ENCODE measurements at regions of chr6 and their contacts with region 1.

Region 1: DNA sequence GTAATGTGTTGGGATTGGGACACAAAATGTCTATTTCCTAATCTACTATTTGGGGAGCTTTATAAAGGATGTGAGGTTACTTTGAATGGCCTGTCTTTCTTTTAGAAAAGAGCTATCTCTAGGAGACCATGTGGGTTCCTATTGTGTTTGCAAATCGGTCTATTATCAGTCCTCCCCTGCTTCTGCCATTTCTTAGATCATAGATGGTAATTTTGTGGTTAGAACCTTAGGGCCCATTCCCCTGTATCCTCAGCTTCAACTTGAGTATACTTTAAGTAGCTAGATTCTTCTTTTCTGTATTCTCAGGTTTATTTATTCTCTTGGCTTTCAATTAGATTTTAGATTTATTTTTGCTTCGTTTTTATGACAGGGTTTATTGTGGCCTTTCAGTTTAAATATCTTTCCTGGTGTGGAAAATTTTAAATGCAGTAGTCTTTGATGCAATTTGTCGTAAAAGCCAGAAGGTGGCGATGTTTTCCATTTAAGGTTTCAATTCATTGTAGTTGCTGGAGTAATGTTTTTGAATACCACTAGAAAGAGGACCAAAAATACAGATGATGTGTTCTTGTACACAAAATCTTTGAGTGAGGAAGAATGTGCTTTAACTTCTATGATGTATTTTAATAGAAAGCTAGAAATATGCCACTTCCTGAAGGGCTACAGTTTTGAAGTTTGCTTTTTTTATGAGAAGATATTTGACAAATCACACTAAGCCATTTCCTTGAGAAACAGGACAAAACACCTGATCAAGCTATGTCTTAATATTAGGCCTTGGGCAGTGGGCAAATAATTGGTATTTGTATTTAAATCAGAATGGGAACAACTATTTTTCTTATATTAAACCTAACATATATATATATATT is 20.3 kb downstream of the TBPL1 start:
- DNase-seq: peak in 1 of 35 experiments; percentile 73
- ATAC-seq: peak; percentile 42 to 66 (median 55)
- H3K4me3 ChIP-seq: no peak overlapping the region
- H3K4me3 Mint-ChIP-seq: no peak overlapping the region
- H3K27ac ChIP-seq: no peak overlapping the region
- H3K27ac Mint-ChIP-seq: peak overlapping the region in 1 of 2 donors; percentile 52
- H3K4me1 ChIP-seq: peaks cover 2 to 5% of the 10 kb centered on the region in 2 experiments
- H3K4me1 Mint-ChIP-seq: peaks cover 50 to 64% (median 58%) of the 10 kb centered on the region in 3 donors
- H3K27me3 ChIP-seq: no peaks in the 10 kb centered on the region
- H3K27me3 Mint-ChIP-seq: no peaks in the 10 kb centered on the region

Region 2: DNA sequence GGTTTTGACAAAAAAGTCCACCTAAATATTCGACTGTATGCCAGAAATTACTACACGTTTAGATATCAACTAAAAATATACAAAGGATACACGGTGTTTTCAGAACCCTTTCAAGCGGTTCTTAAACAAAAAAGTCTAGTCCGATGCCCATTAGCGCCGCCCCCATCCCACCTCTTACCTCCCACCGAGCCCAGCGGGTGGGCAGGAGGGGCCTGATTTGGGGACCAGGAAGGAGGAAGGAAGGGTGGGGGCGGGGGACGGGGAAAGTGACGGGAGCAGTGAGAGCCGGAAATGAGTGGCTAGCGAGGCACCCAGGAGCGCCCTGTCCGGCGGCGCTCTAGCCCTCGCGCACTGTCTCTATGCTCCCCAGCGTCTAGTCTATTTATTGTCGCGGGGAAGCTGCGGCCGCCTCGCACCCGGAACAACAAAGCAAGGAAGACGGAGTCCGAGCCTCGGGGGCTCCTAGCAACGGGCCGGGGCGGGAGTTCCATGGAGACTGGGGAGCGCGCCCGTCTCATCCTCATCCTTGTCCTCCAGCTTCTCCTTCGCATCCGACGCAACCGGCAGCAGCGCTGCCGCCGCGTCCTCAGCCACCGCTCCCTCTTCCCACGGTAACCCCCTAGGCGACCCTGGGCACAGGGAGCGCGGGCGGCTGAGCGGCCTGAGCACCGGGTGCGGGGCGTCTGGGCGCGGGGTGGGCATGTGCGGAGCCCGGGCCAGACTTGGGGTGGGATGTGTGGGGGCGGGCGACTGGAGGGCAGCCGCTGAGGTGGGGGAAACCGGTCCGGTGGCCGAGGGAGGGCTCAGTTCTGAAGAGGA is 20.3 kb before region 1 on chr6 and contains the start of gene TBPL1:
- CTCF ChIA-PET with region 1: interaction called, 9 to 25 read pairs
- POLR2A ChIA-PET with region 1: interaction called, 3 to 9 read pairs
- DNase-seq: peak; percentile 77 to 94 (median 86)
- ATAC-seq: peak; percentile 90 to 94 (median 92)
- H3K4me3 ChIP-seq: peak within 1 kb of the TSS; percentile 79 to 86
- H3K4me3 Mint-ChIP-seq: peak within 1 kb of the TSS; percentile 86 to 98 (median 95)
- H3K27ac ChIP-seq: peak within 1 kb of the TSS; percentile 86
- H3K27ac Mint-ChIP-seq: peak within 1 kb of the TSS; percentile 89 to 92
- H3K4me1 ChIP-seq: peaks cover 17 to 21% of the 10 kb centered on the region in 2 experiments
- H3K4me1 Mint-ChIP-seq: peaks cover 45 to 50% (median 47%) of the 10 kb centered on the region in 3 donors
- H3K27me3 ChIP-seq: no peaks in the 10 kb centered on the region
- H3K27me3 Mint-ChIP-seq: no peaks in the 10 kb centered on the region
- total RNA-seq, gene TBPL1: 27.7 to 30.5 (median 28.9) TPM

Region 3: GRCh38 chr6:133991096-133991593 is 17.8 kb after region 1 on chr6:
- CTCF ChIA-PET with region 1: interaction called, 3 to 5 read pairs
- POLR2A ChIA-PET with region 1: interaction called in 1 of 2 experiments, 10 read pairs
- DNase-seq: no peak
- ATAC-seq: no peak
- H3K4me3 ChIP-seq: no peak overlapping the region
- H3K4me3 Mint-ChIP-seq: no peak overlapping the region
- H3K27ac ChIP-seq: no peak overlapping the region
- H3K27ac Mint-ChIP-seq: no peak overlapping the region
- H3K4me1 ChIP-seq: peaks cover 0 to 5% of the 10 kb centered on the region in 2 experiments
- H3K4me1 Mint-ChIP-seq: peaks cover under 1 to 4% (median 2%) of the 10 kb centered on the region in 3 donors
- H3K27me3 ChIP-seq: no peaks in the 10 kb centered on the region
- H3K27me3 Mint-ChIP-seq: no peaks in the 10 kb centered on the region

Region 4: DNA sequence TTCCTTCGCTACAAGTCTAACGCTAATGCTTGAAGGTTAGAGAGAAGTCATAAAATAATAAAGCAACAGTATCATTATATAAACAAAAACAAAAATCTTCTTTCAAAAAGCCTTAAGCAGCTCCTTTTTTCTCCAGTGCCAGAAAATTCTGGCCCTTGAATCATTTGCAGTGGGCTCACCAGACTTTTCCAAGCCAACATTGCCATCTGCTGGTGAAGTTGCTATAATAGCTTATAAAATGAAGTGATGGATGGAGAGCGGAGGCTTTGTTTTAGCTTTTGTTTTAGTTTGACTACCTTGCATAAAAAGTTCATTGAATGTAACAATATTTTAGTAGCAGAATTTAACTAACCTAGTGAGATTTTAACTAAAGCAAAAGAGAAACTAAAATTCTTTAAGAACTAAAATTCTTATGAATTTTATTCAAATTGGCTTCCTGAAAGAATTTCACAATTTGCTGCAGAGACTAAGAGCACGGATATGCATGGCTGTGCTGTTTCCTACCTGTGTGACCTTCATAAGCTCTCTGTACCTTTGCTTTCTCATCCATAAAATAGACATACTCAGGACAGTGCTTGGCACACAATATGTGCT is 123.9 kb after region 1 on chr6:
- CTCF ChIA-PET with region 1: interaction called, 19 to 37 read pairs
- POLR2A ChIA-PET with region 1: no interaction called
- DNase-seq: peak; percentile 4 to 83 (median 49)
- ATAC-seq: no peak
- H3K4me3 ChIP-seq: no peak overlapping the region
- H3K4me3 Mint-ChIP-seq: no peak overlapping the region
- H3K27ac ChIP-seq: no peak overlapping the region
- H3K27ac Mint-ChIP-seq: no peak overlapping the region
- H3K4me1 ChIP-seq: no peaks in the 10 kb centered on the region
- H3K4me1 Mint-ChIP-seq: no peaks in the 10 kb centered on the region
- H3K27me3 ChIP-seq: peaks cover 0 to 1% of the 10 kb centered on the region in 2 experiments
- H3K27me3 Mint-ChIP-seq: peaks cover 20% of the 10 kb centered on the region in 2 donors